IMR-90 (cell line): ENCODE measurements at regions of chr3 and their contacts with region 1.

Region 1: GRCh38 chr3:69959581-69959980 is 40.0 kb upstream of the SAMMSON start:
- DNase-seq: no peak
- ATAC-seq: no peak
- H3K4me3 ChIP-seq: no peak overlapping the region
- H3K27ac ChIP-seq: no peak overlapping the region
- H3K4me1 ChIP-seq: no peaks in the 10 kb centered on the region
- H3K27me3 ChIP-seq: no peaks in the 10 kb centered on the region
- CTCF ChIP-seq: no peak
- POLR2A ChIP-seq: no peak
- RAD21 ChIP-seq: no peak

Region 2: DNA sequence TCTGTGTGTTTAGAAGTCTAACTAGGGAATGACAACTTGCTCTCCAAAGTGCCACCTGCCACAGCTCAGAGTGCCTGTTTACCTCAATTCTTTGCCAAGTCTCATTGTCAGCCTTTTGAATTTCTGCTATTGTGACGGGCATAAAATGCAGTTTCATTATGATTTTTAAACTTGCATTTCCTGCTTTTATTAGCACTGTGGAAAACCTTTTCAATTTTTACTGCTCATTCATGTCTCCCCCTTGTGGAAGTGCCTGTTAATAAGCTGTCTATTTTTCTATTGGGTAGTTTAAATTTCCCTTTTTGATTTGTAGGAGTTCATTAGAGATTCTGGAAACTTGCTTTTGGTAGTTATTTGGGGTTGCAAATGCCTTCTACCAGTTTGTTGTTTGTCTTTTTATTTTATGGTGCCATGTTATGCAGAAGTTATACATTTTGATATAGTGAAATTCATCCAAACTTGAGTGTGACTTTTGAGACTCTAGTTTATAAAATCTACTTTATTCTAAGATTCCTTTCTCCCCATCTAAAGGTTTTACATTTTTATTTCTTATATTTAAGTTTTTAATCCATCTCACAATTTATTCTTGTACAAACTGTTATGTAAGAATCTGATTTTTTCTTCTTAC is 519.8 kb before region 1 on chr3:
- CTCF ChIA-PET with region 1: no interaction called
- POLR2A ChIA-PET with region 1: no interaction called
- dilution Hi-C with region 1: no loop called
- in situ Hi-C with region 1: loop called (anchors 10 kb)
- intact Hi-C with region 1: loop called (anchors 10 kb)
- DNase-seq: peak; percentile 30
- ATAC-seq: peak; percentile 68
- H3K4me3 ChIP-seq: no peak overlapping the region
- H3K27ac ChIP-seq: no peak overlapping the region
- H3K4me1 ChIP-seq: peaks cover 4% of the 10 kb centered on the region; the same call in 1 of the 2 replicates
- H3K27me3 ChIP-seq: no peaks in the 10 kb centered on the region
- CTCF ChIP-seq: peak; percentile 60
- POLR2A ChIP-seq: no peak
- RAD21 ChIP-seq: peak; percentile 35; the same call in 1 of the 2 replicates